Activated CD4-positive, alpha-beta T cell treated with anti-CD3 and anti-CD28 coated beads, Interleukin-2, amount 10 ng/mL, durations not matched to agents 24 days and 14 days (primary cell): ENCODE measurements at regions of chr2 and their contacts with region 1.

Region 1: DNA sequence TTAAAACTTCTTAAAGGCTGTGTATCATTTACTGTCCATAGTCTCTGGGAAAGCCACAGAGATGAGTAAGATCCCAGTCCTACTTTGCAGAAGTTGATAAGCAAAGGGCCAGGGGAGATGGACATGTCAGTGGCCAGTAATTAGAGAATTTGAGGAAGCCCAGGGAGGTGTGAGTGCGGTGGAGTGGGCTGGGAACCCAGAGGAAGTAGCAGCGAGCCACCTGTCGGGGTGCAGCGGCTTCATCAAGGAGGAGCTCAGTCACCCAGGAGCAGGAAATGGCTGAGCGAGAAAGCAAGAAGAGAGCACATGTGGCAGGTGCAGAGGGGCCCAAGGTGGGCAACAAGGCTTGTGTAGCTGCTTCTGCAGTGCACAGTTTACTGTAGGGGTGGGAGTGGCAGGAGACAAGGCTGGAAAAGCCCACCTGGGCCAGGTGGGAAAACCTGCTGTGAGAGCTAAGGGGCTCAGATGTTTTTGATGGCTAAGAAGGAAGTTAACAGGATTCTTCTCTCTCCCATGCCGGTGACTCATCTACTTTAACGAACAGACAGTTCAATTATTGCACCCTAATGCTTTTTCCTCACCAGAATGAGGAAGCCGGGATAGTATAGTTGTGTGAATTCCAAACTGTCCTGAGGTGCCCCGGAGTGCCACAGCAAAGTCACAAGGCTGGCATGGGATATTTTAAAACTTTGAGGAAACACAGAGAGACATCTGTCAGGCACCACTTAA is 34.8 kb upstream of the MGAT5 start:
- DNase-seq: peak; percentile 75
- H3K4me3 Mint-ChIP-seq: peak overlapping the region; percentile 27
- H3K27ac Mint-ChIP-seq: peak overlapping the region; percentile 66
- H3K4me1 Mint-ChIP-seq: peaks cover 36% of the 10 kb centered on the region
- H3K27me3 Mint-ChIP-seq: no peaks in the 10 kb centered on the region

Region 2: GRCh38 chr2:134039912-134040581 is 179.0 kb before region 1 on chr2:
- intact Hi-C with region 1: no loop called
- DNase-seq: no peak
- H3K4me3 Mint-ChIP-seq: peak overlapping the region; percentile 48
- H3K27ac Mint-ChIP-seq: no peak overlapping the region
- H3K4me1 Mint-ChIP-seq: peaks cover 8% of the 10 kb centered on the region
- H3K27me3 Mint-ChIP-seq: peaks cover 5% of the 10 kb centered on the region

Region 3: DNA sequence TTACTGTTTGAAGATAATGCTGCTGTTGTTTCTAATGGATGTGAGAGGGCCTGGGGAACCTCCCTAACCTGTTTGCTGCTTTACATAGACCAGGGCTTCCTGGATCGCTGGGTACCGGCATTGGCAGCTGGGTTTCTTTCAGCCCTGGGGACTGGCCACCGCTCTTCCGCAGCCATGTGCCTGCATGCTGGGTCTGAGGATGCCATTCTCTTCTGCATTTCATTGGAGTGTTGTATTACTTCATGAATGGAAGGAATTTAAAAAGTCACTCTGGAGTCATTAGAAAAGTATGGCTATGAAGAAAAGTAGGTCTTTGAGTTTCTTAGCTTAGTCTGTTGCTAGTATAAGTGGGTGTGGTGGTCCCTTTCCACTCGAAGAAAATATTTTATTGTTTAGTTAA is 72.5 kb before region 1 on chr2:
- intact Hi-C with region 1: no loop called
- DNase-seq: no peak
- H3K4me3 Mint-ChIP-seq: no peak overlapping the region
- H3K27ac Mint-ChIP-seq: no peak overlapping the region
- H3K4me1 Mint-ChIP-seq: peaks cover 17% of the 10 kb centered on the region
- H3K27me3 Mint-ChIP-seq: no peaks in the 10 kb centered on the region

Region 4: GRCh38 chr2:134232868-134233727 is 14.0 kb after region 1 on chr2:
- intact Hi-C with region 1: loop called (anchors 1 kb)
- DNase-seq: peak; percentile 75
- H3K4me3 Mint-ChIP-seq: peak overlapping the region; percentile 67
- H3K27ac Mint-ChIP-seq: peak overlapping the region; percentile 84
- H3K4me1 Mint-ChIP-seq: peaks cover 58% of the 10 kb centered on the region
- H3K27me3 Mint-ChIP-seq: no peaks in the 10 kb centered on the region

Region 5: GRCh38 chr2:134250840-134251461 is 31.9 kb after region 1 on chr2:
- intact Hi-C with region 1: loop called (anchors 1 kb)
- DNase-seq: no peak
- H3K4me3 Mint-ChIP-seq: no peak overlapping the region
- H3K27ac Mint-ChIP-seq: peak overlapping the region; percentile 8
- H3K4me1 Mint-ChIP-seq: peaks cover 72% of the 10 kb centered on the region
- H3K27me3 Mint-ChIP-seq: peaks cover 10% of the 10 kb centered on the region

Region 6: DNA sequence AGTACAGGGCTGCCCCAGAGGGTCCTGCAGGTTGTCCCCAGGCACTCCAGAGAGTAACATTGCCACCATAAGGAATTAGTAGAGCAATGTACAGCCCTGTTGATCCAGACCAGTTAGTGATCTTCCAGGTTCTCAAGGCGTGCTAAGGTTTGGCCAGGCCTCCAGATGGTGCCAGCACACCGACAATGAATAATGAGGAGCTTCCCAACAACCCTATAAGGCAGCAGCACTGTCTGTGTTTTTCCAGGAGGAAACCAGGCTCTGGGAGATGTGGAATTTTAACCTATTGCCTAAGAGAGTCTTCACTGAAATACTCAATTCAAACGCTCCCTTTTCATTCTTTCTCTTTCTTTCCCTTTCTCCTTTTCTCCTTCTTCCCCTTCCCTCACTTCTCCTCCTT is 156.8 kb after region 1 on chr2:
- intact Hi-C with region 1: no loop called
- DNase-seq: no peak
- H3K4me3 Mint-ChIP-seq: no peak overlapping the region
- H3K27ac Mint-ChIP-seq: no peak overlapping the region
- H3K4me1 Mint-ChIP-seq: no peaks in the 10 kb centered on the region
- H3K27me3 Mint-ChIP-seq: no peaks in the 10 kb centered on the region

Region 7: DNA sequence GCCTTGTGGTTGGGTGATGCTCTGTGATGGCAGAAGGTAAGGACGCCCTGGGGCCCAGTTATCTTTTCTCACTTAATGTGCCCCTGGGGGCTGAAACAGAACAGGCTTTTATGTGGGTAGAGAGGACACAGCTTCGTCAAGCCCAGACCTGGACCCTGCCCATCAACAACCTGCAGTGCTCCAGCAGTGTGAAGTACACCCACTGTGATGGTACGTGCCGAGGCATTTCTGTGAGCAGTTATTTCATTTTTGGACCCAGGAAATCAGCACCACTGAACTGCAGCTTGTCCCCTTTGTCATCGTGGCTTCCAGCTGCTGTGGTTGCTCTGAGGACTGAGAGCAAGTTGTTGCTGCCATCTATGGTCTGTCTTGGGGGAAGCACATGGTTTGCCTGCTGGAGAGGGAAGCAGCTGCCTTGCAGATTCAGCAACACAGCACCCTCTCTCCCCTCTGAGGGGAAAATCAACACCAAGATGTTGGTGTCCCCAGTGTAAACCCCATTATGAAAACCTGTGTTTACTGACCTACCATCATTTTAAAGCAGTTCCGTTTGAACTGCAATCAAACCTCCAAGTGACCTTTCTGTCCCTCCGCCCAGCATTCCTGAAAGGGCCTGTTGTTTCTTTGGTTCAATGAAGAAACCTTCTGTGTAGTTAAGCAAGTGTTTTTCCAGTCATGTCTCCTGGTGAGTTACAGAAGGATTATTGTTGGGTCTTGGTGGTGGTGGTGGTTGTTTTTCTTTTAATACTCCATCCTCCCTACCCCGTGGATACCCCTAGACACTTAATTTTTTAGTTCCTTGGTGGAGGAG is 192.9 kb after region 1 on chr2:
- intact Hi-C with region 1: loop called (anchors 5 kb)
- DNase-seq: peak; percentile 92
- H3K4me3 Mint-ChIP-seq: no peak overlapping the region
- H3K27ac Mint-ChIP-seq: no peak overlapping the region
- H3K4me1 Mint-ChIP-seq: peaks cover 19% of the 10 kb centered on the region
- H3K27me3 Mint-ChIP-seq: no peaks in the 10 kb centered on the region

Region 8: DNA sequence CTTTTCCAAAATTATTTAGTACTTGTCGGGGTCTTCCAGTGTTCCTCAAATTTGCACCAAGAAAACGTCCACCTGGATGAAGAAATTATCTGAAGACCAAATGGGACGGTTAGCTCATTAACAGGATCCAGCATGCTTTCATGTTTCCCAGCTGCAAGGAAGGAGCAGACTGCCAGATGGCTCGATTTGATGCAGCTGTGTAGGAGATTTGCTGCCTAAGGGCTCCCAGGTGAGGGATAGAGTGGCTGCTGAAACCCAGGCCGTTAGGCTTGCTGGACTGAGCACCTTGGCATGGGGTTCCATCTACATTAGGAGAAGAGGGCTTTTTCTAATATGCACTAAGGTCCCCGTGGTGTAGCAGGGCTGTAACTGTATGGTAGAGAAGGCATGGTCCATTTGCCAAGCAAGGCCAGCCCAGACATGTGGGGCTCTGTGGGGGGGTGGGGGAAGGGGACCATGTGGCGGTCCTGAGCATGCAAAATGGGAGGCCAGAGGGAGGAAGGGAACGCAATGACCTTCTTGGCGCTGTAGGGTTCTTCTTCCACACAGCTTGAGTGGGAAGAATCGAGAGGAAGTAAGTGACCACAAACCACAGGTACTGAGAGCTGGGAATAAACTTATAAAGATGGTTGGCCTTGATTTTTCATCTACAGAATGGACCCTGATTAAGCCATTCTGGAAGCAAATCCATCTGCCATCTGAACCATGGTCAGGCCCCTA is 355.7 kb after region 1 on chr2:
- intact Hi-C with region 1: no loop called
- DNase-seq: no peak
- H3K4me3 Mint-ChIP-seq: no peak overlapping the region
- H3K27ac Mint-ChIP-seq: no peak overlapping the region
- H3K4me1 Mint-ChIP-seq: no peaks in the 10 kb centered on the region
- H3K27me3 Mint-ChIP-seq: peaks cover 9% of the 10 kb centered on the region